ENCODE measurements at regions of chr6 and their contacts with region 1.

Region 1: GRCh38 chr6:26122793-26123674 is 35.8 kb downstream of the HFE start:
- DNase-seq: peak; percentile 76 to 97 (median 91)
- ATAC-seq: peak; percentile 64 to 70 (median 68)
- H3K4me3 ChIP-seq: peak overlapping the region; percentile 88 to 100
- H3K4me3 Mint-ChIP-seq: peak overlapping the region; percentile 99 to 100 (median 99)
- H3K27ac ChIP-seq: peak overlapping the region; percentile 87
- H3K27ac Mint-ChIP-seq: peak overlapping the region; percentile 99
- H3K4me1 ChIP-seq: peaks cover 10 to 15% of the 10 kb centered on the region in 2 experiments
- H3K4me1 Mint-ChIP-seq: peaks cover 32 to 47% (median 35%) of the 10 kb centered on the region in 3 donors
- H3K27me3 ChIP-seq: no peaks in the 10 kb centered on the region
- H3K27me3 Mint-ChIP-seq: no peaks in the 10 kb centered on the region

Region 2: DNA sequence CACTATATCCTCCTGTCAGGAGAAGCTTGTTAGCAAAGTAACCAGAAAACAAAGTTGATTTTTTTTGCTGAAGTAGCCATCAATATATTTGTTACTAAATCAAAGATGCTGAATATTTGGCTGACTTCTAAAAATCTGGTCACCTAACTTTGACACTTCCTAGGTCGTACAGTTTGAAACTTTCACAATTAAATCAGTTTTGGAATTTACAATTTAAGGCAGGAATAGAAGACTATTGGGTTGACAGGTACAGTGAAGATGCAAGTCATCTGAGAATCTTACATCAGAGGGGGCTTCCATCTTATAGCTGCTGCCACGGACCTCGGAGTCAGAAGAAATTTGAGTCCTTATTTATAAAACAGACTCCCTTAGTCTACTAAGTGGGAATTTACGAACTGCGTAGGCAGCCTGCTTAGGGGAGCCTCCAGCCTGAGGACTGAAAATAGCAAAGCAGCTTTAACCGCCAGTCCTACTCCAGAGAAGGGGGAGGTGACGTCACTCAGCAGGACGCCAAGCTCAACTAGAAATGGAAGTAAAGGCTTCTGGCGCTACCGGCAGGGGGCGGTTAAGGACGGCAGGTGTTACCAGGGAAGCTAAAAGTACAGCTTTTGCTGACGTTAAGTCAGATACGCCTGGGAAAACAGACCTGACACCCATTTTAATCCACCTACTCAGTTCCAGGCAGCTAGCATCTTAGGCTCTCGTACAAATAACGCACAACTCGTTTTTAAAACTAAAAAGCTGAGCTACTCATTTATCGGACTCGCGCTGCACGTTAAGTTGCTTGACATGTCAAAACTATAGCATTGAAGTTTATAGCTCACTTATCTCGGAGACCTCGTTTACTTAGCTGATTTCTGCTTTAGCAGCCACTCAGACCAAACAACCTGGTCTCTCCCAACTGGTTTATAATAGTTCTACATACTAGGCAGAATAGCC is 96.9 kb before region 1 on chr6:
- CTCF ChIA-PET with region 1: interaction called in 1 of 2 experiments, 5 read pairs
- POLR2A ChIA-PET with region 1: interaction called, 23 to 52 read pairs
- DNase-seq: peak; percentile 70 to 98 (median 96)
- ATAC-seq: peak; percentile 33 to 46 (median 36)
- H3K4me3 ChIP-seq: peak overlapping the region; percentile 63 to 88
- H3K4me3 Mint-ChIP-seq: peak overlapping the region; percentile 82 to 93 (median 92)
- H3K27ac ChIP-seq: peak overlapping the region; percentile 93
- H3K27ac Mint-ChIP-seq: peak overlapping the region; percentile 93 to 99
- H3K4me1 ChIP-seq: peaks cover 22 to 24% of the 10 kb centered on the region in 2 experiments
- H3K4me1 Mint-ChIP-seq: peaks cover 43 to 53% (median 44%) of the 10 kb centered on the region in 3 donors
- H3K27me3 ChIP-seq: no peaks in the 10 kb centered on the region
- H3K27me3 Mint-ChIP-seq: peaks cover 0 to 2% of the 10 kb centered on the region in 2 donors

Region 3: DNA sequence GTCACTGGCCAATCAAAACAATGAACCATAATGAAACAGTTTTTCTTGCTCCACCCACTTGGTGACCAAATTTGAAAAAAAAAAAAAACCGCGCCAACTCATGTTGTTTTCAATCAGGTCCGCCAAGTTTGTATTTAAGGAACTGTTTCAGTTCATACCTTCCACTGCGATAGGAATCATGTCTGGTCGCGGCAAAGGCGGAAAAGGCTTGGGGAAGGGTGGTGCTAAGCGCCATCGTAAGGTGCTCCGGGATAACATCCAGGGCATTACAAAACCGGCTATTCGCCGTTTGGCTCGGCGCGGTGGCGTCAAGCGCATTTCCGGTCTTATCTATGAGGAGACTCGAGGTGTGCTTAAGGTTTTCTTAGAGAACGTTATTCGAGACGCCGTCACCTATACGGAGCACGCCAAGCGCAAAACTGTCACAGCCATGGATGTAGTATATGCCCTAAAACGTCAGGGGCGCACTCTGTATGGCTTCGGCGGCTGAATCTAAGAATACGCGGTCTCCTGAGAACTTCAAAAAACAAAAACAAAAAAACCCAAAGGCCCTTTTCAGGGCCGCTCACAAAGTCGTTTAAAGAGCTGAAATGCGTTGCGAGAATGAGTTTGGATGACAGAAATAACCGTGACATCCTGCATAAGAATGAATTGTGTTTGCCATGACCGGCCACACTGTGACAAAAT is 19.1 kb before region 1 on chr6:
- CTCF ChIA-PET with region 1: interaction called, 4 to 13 read pairs
- POLR2A ChIA-PET with region 1: interaction called, 17 to 134 read pairs
- DNase-seq: peak; percentile 82 to 95 (median 89)
- ATAC-seq: peak; percentile 87 to 92 (median 90)
- H3K4me3 ChIP-seq: peak overlapping the region; percentile 40 to 68
- H3K4me3 Mint-ChIP-seq: peak overlapping the region; percentile 78 to 91 (median 89)
- H3K27ac ChIP-seq: peak overlapping the region; percentile 85
- H3K27ac Mint-ChIP-seq: peak overlapping the region; percentile 96 to 99
- H3K4me1 ChIP-seq: peaks cover 7 to 12% of the 10 kb centered on the region in 2 experiments
- H3K4me1 Mint-ChIP-seq: peaks cover 15 to 18% (median 16%) of the 10 kb centered on the region in 3 donors
- H3K27me3 ChIP-seq: peaks cover 0 to 4% of the 10 kb centered on the region in 2 experiments
- H3K27me3 Mint-ChIP-seq: peaks cover 0 to 3% of the 10 kb centered on the region in 2 donors

Region 4: DNA sequence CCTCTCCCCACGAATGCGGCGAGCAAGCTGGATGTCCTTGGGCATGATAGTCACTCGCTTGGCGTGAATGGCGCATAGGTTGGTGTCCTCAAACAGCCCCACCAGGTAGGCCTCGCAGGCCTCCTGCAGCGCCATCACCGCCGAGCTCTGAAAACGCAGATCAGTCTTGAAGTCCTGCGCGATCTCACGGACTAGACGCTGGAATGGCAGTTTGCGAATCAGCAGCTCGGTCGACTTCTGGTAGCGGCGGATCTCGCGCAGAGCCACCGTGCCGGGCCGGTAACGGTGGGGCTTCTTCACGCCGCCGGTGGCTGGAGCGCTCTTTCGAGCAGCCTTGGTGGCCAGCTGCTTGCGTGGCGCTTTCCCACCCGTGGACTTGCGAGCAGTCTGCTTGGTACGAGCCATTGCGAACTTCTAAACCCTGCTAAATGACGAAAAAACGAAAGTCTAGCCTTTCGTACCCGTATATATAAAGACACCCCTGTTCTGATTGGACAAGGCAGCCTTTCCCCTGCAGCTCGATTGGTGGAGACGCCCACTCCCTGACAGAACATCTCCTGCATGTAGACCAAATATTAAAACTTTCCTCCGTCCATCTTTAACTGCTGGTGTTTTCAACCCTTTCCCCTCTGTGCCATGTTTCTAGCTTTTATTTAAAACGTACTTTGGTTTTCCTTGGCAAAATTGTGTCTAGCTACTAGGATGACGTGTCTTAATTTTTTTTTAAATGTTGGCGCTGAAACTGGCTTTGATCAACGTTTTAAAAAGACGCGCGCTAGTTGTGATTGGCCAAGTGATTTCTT is 74.0 kb after region 1 on chr6:
- CTCF ChIA-PET with region 1: interaction called in 1 of 2 experiments, 8 read pairs
- POLR2A ChIA-PET with region 1: interaction called, 43 to 184 read pairs
- DNase-seq: peak; percentile 55 to 93 (median 81)
- ATAC-seq: peak; percentile 58 to 66 (median 61)
- H3K4me3 ChIP-seq: peak overlapping the region; percentile 79 to 99
- H3K4me3 Mint-ChIP-seq: peak overlapping the region; percentile 95 to 98 (median 97)
- H3K27ac ChIP-seq: peak overlapping the region; percentile 85
- H3K27ac Mint-ChIP-seq: peak overlapping the region; percentile 93 to 98
- H3K4me1 ChIP-seq: peaks cover 13 to 30% of the 10 kb centered on the region in 2 experiments
- H3K4me1 Mint-ChIP-seq: peaks cover 38 to 60% (median 46%) of the 10 kb centered on the region in 3 donors
- H3K27me3 ChIP-seq: no peaks in the 10 kb centered on the region
- H3K27me3 Mint-ChIP-seq: no peaks in the 10 kb centered on the region

Region 5: DNA sequence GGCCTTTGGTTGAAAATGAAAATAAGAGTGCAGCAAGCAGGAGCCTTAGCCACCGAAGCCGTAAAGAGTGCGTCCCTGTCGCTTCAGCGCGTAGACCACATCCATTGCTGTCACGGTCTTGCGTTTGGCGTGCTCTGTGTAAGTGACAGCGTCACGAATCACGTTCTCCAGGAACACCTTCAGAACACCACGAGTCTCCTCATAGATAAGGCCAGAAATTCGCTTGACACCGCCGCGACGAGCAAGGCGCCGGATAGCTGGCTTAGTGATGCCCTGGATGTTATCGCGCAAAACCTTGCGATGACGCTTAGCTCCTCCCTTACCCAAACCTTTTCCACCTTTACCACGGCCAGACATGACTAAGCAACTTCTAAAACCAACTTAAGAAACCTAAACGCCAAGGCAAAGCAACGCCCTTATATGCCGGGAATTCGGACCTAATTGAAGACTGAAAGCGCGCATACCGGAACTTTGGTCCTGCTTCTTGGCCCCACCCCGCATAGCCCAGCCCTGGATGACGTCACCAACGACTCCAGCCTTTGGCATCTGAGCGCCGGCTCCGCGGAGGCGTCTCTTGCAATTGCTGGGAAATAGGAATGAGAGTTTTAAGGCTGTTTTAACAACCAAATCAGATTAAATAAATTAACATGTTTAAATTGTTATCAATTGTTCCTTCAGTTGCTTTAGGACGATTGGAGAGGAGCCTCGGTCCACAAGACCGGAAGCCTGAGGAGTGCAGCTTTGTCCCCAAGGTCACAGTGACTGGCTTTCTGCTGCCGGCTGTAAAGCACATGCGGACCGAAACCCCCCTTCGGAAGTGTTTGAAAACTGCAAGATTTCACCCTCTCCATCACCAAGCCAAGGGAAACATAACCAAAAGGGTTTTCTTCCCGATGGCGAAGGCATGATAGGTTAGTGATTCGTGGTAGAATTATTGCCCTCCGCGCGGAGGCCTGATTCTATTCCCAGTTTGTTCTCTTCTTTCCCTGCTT is 162.4 kb after region 1 on chr6:
- CTCF ChIA-PET with region 1: interaction called in 1 of 2 experiments, 3 read pairs
- POLR2A ChIA-PET with region 1: interaction called in 1 of 2 experiments, 14 read pairs
- DNase-seq: peak; percentile 86 to 97 (median 91)
- ATAC-seq: peak; percentile 77 to 87 (median 80)
- H3K4me3 ChIP-seq: peak overlapping the region; percentile 50 to 84
- H3K4me3 Mint-ChIP-seq: peak overlapping the region; percentile 84 to 92 (median 88)
- H3K27ac ChIP-seq: peak overlapping the region; percentile 81
- H3K27ac Mint-ChIP-seq: peak overlapping the region; percentile 92 to 93
- H3K4me1 ChIP-seq: peaks cover 14 to 19% of the 10 kb centered on the region in 2 experiments
- H3K4me1 Mint-ChIP-seq: peaks cover 30 to 41% (median 31%) of the 10 kb centered on the region in 3 donors
- H3K27me3 ChIP-seq: no peaks in the 10 kb centered on the region
- H3K27me3 Mint-ChIP-seq: peaks cover 4 to 5% of the 10 kb centered on the region in 2 donors

Region 6: GRCh38 chr6:27809939-27810767 is 1687.1 kb after region 1 on chr6:
- CTCF ChIA-PET with region 1: no interaction called
- POLR2A ChIA-PET with region 1: interaction called in 1 of 2 experiments, 12 read pairs
- DNase-seq: peak; percentile 60 to 94 (median 73)
- ATAC-seq: peak; percentile 61 to 66 (median 62)
- H3K4me3 ChIP-seq: peak overlapping the region; percentile 62 to 68
- H3K4me3 Mint-ChIP-seq: peak overlapping the region; percentile 87 to 94 (median 90)
- H3K27ac ChIP-seq: peak overlapping the region; percentile 81
- H3K27ac Mint-ChIP-seq: peak overlapping the region; percentile 95 to 98
- H3K4me1 ChIP-seq: peaks cover 38% of the 10 kb centered on the region in 2 experiments
- H3K4me1 Mint-ChIP-seq: peaks cover 48 to 61% (median 52%) of the 10 kb centered on the region in 3 donors
- H3K27me3 ChIP-seq: no peaks in the 10 kb centered on the region
- H3K27me3 Mint-ChIP-seq: no peaks in the 10 kb centered on the region